Pancreas (tissue), 10 donors: ENCODE measurements at regions of chr19 and their contacts with region 1.

Region 1: GRCh38 chr19:3665681-3666544 is 34.4 kb downstream of the PIP5K1C start:
- DNase-seq: peak; percentile 36 to 91 (median 74)
- ATAC-seq: peak; percentile 75 to 90 (median 85)
- H3K4me3 ChIP-seq: no peak overlapping the region
- H3K27ac ChIP-seq: no peak overlapping the region
- H3K4me1 ChIP-seq: no peaks in the 10 kb centered on the region
- H3K27me3 ChIP-seq: no peaks in the 10 kb centered on the region
- CTCF ChIP-seq: peak; percentile 93 to 96 (median 94)

Region 2: GRCh38 chr19:3700221-3701032 is 34.5 kb after region 1 on chr19 and contains the start of gene PIP5K1C:
- intact Hi-C with region 1: loop called in 1 of 3 experiments (anchors 5 kb)
- DNase-seq: peak; percentile 80 to 99 (median 92)
- ATAC-seq: peak; percentile 92 to 99 (median 98)
- H3K4me3 ChIP-seq: peak within 1 kb of the TSS; percentile 48 to 90 (median 87)
- H3K27ac ChIP-seq: peak within 1 kb of the TSS; percentile 16 to 34 (median 22)
- H3K4me1 ChIP-seq: no peaks in the 10 kb centered on the region
- H3K27me3 ChIP-seq: no peaks in the 10 kb centered on the region
- CTCF ChIP-seq: peak; percentile 49 to 70 (median 59)
- total RNA-seq, gene PIP5K1C: 12.9 to 21.4 (median 14.9) TPM

Region 3: DNA sequence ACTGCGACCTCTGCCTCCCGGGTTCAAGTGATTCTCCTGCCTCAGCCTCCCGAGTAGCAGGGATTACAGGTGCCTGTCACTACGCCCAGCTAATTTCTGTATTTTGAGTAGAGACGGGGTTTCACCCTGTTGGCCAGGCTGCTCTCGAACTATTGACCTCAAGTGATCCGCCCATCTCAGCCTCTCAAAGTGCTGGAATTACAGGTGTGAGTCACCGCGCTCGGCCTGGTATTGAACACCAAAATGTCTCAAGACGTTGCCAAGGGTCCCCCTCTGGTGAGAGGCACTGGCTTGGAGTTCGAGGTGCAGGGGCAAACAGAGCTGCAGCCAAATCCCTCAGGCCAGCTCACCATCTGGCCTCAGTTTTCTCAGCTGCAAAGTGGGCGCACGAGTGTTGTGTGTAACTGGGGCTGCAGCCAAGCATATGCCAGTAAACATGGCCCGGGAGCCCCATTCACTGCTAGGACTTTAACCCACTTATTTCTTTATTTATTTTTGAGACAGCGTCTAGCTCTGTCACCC is 50.3 kb after region 1 on chr19:
- intact Hi-C with region 1: loop called in 1 of 3 experiments (anchors 5 kb)
- DNase-seq: no peak
- ATAC-seq: no peak
- H3K4me3 ChIP-seq: no peak overlapping the region
- H3K27ac ChIP-seq: no peak overlapping the region
- H3K4me1 ChIP-seq: peaks cover 0 to 10% (median 0%) of the 10 kb centered on the region in 3 donors
- H3K27me3 ChIP-seq: no peaks in the 10 kb centered on the region
- CTCF ChIP-seq: no peak

Region 4: DNA sequence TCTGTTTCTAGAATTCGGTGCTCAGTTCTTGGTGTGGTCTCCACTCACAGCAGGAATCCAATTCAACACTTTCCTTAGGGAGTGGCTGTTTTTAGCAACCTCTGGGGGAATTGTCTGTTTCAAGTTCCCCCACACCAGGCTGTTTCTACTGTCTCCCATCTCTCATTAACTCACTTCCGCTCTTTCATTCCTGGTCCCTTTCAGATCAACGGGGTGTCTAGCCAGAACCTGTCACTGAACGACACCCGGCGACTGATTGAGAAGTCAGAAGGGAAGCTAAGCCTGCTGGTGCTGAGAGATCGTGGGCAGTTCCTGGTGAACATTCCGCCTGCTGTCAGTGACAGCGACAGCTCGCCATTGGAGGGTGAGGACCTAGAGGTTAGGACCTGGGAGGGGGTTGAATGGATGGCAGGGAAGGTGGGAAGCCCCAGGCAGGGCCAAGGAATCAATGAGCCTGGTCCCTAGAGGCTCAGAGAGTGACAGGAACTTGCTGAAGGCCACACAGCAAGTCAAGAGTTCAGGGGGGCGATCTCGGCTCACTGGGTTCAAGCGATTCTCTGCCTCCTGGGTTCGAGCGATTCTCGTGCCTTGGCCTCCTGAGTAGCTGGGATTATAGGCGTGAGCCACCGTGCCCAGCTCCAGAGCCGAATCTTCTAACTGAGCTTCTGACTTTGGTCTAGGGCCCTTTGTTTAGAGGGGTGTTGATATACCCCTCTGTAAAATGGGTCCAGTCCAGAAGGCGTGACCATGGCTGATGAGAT is 67.8 kb after region 1 on chr19:
- intact Hi-C with region 1: no loop called
- DNase-seq: no peak
- ATAC-seq: no peak
- H3K4me3 ChIP-seq: no peak overlapping the region
- H3K27ac ChIP-seq: no peak overlapping the region
- H3K4me1 ChIP-seq: no peaks in the 10 kb centered on the region
- H3K27me3 ChIP-seq: no peaks in the 10 kb centered on the region
- CTCF ChIP-seq: no peak

Region 5: DNA sequence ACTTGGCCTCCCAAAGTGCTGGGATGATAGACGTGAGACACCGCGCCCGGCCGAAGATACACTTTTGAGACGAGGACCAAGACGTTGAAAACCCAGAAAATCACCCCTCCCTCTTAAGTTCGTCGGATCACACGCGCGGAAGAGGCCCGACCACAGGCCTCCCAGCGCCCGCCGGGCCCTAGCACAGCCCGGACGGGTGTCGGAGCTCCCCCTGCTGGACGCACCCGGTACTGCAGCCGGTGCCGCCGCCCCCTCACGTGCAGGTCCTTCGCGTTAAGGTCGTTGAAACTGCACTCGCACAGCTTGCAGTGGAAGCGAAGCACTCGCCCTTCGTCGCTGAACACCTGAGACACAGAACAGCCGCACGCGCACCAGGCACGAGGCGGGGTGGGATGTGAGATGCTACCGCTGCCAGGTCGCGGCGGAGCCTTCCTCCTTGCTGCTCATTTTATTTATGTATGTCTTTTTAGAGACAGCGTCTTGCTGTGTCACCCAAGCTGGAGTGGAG is 156.0 kb after region 1 on chr19:
- intact Hi-C with region 1: loop called in 2 of 3 experiments (anchors 5 to 10 kb)
- DNase-seq: peak in 5 of 6 donors; percentile 34 to 92 (median 65)
- ATAC-seq: peak; percentile 69 to 93 (median 85)
- H3K4me3 ChIP-seq: no peak overlapping the region
- H3K27ac ChIP-seq: no peak overlapping the region
- H3K4me1 ChIP-seq: no peaks in the 10 kb centered on the region
- H3K27me3 ChIP-seq: no peaks in the 10 kb centered on the region
- CTCF ChIP-seq: peak; percentile 96 to 99 (median 98)